ENCODE measurements at regions of chr11 and their contacts with region 1.

Region 1: DNA sequence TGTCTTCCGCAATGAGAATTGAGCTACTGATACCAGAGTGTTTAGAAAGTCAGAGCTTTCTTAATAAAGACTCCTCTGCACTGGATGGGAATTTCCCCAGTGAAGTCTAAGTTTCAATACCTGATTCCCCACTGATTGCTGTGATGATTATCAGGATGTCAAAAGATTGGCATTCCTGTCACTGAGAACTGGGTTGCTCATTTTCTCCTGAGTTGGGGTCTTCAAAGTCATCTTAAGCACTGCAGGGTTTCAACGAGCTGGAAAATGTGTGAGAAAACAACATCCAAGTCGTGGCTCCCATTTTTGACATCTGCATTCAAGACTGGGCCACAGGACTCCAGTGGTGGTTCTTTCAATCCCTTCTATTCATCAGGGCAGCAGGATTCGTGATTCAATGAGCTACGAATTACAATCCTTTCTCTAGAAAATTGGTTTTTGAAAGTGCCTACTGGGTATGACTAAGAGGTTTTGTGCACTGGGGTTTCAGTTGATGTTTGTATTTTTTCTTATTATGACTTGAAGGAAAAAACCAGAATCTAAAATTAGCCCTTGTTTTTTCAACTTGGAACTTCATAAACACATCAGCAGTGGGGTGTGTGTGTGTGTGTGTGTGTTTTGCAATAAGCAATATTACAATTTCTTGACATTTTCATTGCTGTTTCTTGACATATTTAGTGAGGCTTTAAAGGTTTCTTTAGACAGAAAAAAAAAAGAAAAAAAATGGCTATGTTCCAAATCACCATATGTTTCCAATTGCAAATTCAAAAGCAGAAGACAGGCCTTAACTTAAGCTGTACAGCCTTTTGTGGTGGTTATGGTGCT is 233.0 kb downstream of the FAM76B start:
- DNase-seq: peak; percentile 6
- H3K4me3 Mint-ChIP-seq: peak overlapping the region; percentile 38
- H3K27ac Mint-ChIP-seq: peak overlapping the region; percentile 86
- H3K4me1 Mint-ChIP-seq: peaks cover 55% of the 10 kb centered on the region
- H3K27me3 Mint-ChIP-seq: no peaks in the 10 kb centered on the region

Region 2: GRCh38 chr11:95150946-95151684 is 405.4 kb before region 1 on chr11:
- intact Hi-C with region 1: loop called (anchors 2 kb)
- DNase-seq: peak; percentile 87
- H3K4me3 Mint-ChIP-seq: peak overlapping the region; percentile 87
- H3K27ac Mint-ChIP-seq: peak overlapping the region; percentile 78
- H3K4me1 Mint-ChIP-seq: peaks cover 46% of the 10 kb centered on the region
- H3K27me3 Mint-ChIP-seq: peaks cover 6% of the 10 kb centered on the region

Region 3: GRCh38 chr11:95345651-95346050 is 210.9 kb before region 1 on chr11:
- intact Hi-C with region 1: loop called (anchors 2 kb)
- DNase-seq: no peak
- H3K4me3 Mint-ChIP-seq: no peak overlapping the region
- H3K27ac Mint-ChIP-seq: no peak overlapping the region
- H3K4me1 Mint-ChIP-seq: peaks cover 23% of the 10 kb centered on the region
- H3K27me3 Mint-ChIP-seq: peaks cover 24% of the 10 kb centered on the region

Region 4: GRCh38 chr11:95545116-95545875 is 11.3 kb before region 1 on chr11:
- intact Hi-C with region 1: no loop called
- DNase-seq: no peak
- H3K4me3 Mint-ChIP-seq: no peak overlapping the region
- H3K27ac Mint-ChIP-seq: peak overlapping the region; percentile 3
- H3K4me1 Mint-ChIP-seq: peaks cover 28% of the 10 kb centered on the region
- H3K27me3 Mint-ChIP-seq: no peaks in the 10 kb centered on the region

Region 5: GRCh38 chr11:95584589-95584988 is 28.0 kb after region 1 on chr11:
- intact Hi-C with region 1: loop called (anchors 1 kb)
- DNase-seq: no peak
- H3K4me3 Mint-ChIP-seq: no peak overlapping the region
- H3K27ac Mint-ChIP-seq: peak overlapping the region; percentile 10
- H3K4me1 Mint-ChIP-seq: peaks cover 34% of the 10 kb centered on the region
- H3K27me3 Mint-ChIP-seq: no peaks in the 10 kb centered on the region

Region 6: GRCh38 chr11:95606824-95607223 is 50.3 kb after region 1 on chr11:
- intact Hi-C with region 1: no loop called
- DNase-seq: no peak
- H3K4me3 Mint-ChIP-seq: no peak overlapping the region
- H3K27ac Mint-ChIP-seq: no peak overlapping the region
- H3K4me1 Mint-ChIP-seq: peaks cover 8% of the 10 kb centered on the region
- H3K27me3 Mint-ChIP-seq: no peaks in the 10 kb centered on the region

Region 7: DNA sequence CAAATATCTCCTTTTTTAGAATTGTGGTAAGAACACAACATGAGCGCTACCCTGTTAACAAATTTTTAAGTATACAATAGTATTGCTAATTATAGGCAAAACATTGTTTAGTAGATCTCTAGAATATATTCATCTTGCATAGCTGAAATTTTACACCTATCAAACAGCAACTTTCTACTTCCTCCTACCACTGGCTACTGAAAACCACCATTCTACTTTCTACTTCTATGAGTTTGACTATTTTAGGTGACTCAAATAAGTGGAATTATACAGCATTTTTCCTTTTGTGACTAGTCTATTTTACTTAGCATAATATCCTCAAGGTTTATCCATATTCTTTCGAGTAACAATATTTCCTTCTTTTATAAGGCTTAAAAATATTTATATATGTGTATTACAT is 104.6 kb after region 1 on chr11:
- intact Hi-C with region 1: loop called (anchors 1 kb)
- DNase-seq: no peak
- H3K4me3 Mint-ChIP-seq: no peak overlapping the region
- H3K27ac Mint-ChIP-seq: no peak overlapping the region
- H3K4me1 Mint-ChIP-seq: peaks cover 27% of the 10 kb centered on the region
- H3K27me3 Mint-ChIP-seq: no peaks in the 10 kb centered on the region

Region 8: GRCh38 chr11:95688580-95689189 is 132.1 kb after region 1 on chr11:
- intact Hi-C with region 1: loop called (anchors 1 kb)
- DNase-seq: peak; percentile 34
- H3K4me3 Mint-ChIP-seq: no peak overlapping the region
- H3K27ac Mint-ChIP-seq: no peak overlapping the region
- H3K4me1 Mint-ChIP-seq: peaks cover 26% of the 10 kb centered on the region
- H3K27me3 Mint-ChIP-seq: no peaks in the 10 kb centered on the region

Region 9: GRCh38 chr11:95715777-95716241 is 159.3 kb after region 1 on chr11:
- intact Hi-C with region 1: loop called (anchors 1 kb)
- DNase-seq: no peak
- H3K4me3 Mint-ChIP-seq: peak overlapping the region; percentile 54
- H3K27ac Mint-ChIP-seq: peak overlapping the region; percentile 82
- H3K4me1 Mint-ChIP-seq: peaks cover 63% of the 10 kb centered on the region
- H3K27me3 Mint-ChIP-seq: no peaks in the 10 kb centered on the region